Calu3 (cell line): ENCODE measurements at regions of chr19 and their contacts with region 1.

Region 1: DNA sequence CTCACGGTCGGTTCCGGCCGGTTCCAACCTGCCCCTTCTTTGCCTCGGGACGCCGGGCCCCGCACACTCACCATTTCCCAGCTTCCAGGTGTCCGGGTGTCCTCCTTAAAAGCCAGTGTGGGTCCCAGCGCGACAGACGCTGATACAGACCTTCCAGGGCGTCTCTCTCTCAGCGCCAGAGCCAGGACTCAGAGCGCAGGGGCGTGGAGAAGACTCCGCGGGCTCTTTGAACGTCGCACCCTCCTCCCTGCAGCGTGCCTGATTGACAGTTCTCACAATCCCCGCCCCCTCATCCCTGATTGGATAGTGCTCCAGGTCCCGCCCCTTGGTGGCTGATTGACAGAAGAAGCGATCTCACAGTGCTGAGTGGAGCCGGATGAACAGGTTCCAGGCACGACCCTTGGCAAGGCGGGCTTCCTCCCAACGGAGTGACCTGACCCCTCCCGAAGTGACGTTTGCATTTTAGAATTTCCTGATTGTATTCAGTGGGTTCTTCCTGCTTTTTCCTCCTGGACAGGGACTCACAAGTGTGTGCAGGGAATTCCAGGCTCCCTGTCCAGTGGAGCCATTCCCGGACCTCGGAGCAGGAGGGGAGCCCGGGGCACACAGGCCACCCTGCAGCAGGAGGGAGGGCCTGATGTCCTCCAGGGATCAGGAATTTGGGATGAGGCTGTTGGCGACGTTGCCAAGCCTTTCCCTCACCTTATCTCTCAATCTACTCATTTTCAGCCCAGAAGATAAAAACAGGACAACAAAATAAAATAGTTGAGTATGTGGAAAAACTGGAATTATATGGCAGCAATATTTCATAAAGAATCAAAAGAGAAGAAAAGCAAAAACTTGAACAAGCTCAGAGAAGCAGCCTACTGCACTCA is at the start of gene ZNF823:
- DNase-seq: peak; percentile 97
- H3K4me3 Mint-ChIP-seq: peak within 1 kb of the TSS; percentile 95
- H3K27ac Mint-ChIP-seq: peak within 1 kb of the TSS; percentile 97
- H3K4me1 Mint-ChIP-seq: peaks cover 8% of the 10 kb centered on the region
- H3K27me3 Mint-ChIP-seq: no peaks in the 10 kb centered on the region
- CTCF ChIP-seq: no peak
- total RNA-seq, gene ZNF823: 7.4 and 7.9 TPM in 2 replicates

Region 2: GRCh38 chr19:11528551-11529341 is 210.2 kb before region 1 on chr19 and contains the start of gene ECSIT:
- CTCF ChIA-PET with region 1: interaction called, 10 read pairs
- intact Hi-C with region 1: no loop called
- DNase-seq: peak; percentile 93
- H3K4me3 Mint-ChIP-seq: peak within 1 kb of the TSS; percentile 97
- H3K27ac Mint-ChIP-seq: peak within 1 kb of the TSS; percentile 81
- H3K4me1 Mint-ChIP-seq: peaks cover 15% of the 10 kb centered on the region
- H3K27me3 Mint-ChIP-seq: no peaks in the 10 kb centered on the region
- CTCF ChIP-seq: no peak
- total RNA-seq, gene ECSIT: 19.3 and 22.1 TPM in 2 replicates